ENCODE measurements at regions of chr3 and their contacts with region 1.

Region 1: GRCh38 chr3:41961750-41962679 is at the start of gene ULK4:
- DNase-seq: peak; percentile 99
- total RNA-seq, gene ULK4: 5.1 TPM

Region 2: GRCh38 chr3:41900265-41900664 is 61.8 kb before region 1 on chr3:
- intact Hi-C with region 1: loop called (anchors 5 kb)
- DNase-seq: no peak

Region 3: DNA sequence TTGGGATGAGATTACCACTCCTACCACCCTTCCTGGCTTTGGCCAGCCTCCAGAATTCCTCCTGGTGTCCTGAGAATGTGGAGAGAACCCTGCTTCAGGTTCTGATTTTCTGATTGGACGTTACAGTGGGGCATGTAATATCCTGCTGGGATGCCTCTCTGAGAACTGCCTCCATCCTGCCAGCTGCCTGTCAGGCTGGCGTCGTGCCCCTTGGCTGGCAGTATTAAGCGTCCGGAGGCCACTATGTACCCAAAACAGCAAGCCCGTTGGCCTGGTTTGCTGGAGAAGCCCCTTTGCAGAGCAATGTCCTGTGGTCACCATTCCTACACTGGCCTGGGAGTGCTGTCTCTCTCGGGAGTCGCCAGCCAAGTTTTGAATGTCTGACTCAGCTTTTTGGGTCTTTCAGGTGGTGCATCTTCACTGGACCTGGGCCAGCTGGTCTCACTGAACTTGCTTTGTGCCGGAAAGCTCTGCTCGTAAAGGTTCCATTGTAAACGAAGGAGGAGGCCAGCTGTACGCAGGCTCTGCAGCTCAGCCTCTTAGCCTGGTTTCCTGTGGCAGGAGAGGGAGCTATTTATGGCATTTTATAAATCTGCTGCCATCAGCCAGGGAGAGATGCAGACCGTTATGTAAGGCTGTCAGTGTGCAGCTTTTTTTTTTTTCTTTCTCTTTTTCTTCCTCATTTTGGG is 110.0 kb after region 1 on chr3:
- intact Hi-C with region 1: loop called (anchors 1 kb)
- DNase-seq: no peak

Region 4: DNA sequence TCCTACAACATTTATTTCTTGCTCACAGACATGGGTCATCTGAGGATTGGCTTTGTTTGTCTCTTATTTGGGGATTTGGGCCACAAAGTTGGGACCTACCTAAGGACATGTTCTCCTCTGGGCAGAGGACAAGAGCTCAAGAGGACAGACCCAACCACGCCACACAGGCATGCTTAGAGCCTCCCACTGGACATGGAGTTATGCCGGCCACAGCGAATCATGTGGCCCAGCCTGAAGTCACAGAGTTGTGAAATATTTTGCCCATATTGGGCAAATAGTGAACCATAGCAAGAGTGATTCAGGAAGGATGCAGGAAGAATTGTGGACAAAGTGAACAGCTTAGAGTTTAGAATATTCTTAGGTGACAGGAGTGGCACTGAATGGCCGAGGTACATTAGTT is 139.0 kb after region 1 on chr3:
- intact Hi-C with region 1: loop called (anchors 2 kb)
- DNase-seq: no peak

Region 5: GRCh38 chr3:42369304-42369703 is 407.3 kb after region 1 on chr3:
- intact Hi-C with region 1: no loop called
- DNase-seq: no peak

Measured in cardiac septum (tissue), 1 donor.